Common myeloid progenitor, CD34-positive (primary cell): ENCODE measurements at regions of chr17 and their contacts with region 1.

Region 1: GRCh38 chr17:78360371-78361224 is 721 bp upstream of the SOCS3 start:
- DNase-seq: peak; percentile 78 to 88 (median 86)
- H3K4me3 ChIP-seq: peak overlapping the region; percentile 48 to 94 (median 77)
- H3K27ac ChIP-seq: peak overlapping the region in 1 of 2 experiments; percentile 61
- H3K4me1 ChIP-seq: peaks cover 0 to 64% (median 60%) of the 10 kb centered on the region in 4 experiments
- H3K27me3 ChIP-seq: no peaks in the 10 kb centered on the region

Region 2: GRCh38 chr17:78258323-78259191 is 102.0 kb before region 1 on chr17:
- CTCF ChIA-PET with region 1: no interaction called
- POLR2A ChIA-PET with region 1: interaction called, 12 read pairs
- DNase-seq: peak; percentile 82 to 96 (median 93)
- H3K4me3 ChIP-seq: peak overlapping the region in 5 of 7 experiments; percentile 4 to 56 (median 53)
- H3K27ac ChIP-seq: peak overlapping the region; percentile 66 to 91
- H3K4me1 ChIP-seq: peaks cover 19 to 91% (median 90%) of the 10 kb centered on the region in 4 experiments
- H3K27me3 ChIP-seq: no peaks in the 10 kb centered on the region

Region 3: DNA sequence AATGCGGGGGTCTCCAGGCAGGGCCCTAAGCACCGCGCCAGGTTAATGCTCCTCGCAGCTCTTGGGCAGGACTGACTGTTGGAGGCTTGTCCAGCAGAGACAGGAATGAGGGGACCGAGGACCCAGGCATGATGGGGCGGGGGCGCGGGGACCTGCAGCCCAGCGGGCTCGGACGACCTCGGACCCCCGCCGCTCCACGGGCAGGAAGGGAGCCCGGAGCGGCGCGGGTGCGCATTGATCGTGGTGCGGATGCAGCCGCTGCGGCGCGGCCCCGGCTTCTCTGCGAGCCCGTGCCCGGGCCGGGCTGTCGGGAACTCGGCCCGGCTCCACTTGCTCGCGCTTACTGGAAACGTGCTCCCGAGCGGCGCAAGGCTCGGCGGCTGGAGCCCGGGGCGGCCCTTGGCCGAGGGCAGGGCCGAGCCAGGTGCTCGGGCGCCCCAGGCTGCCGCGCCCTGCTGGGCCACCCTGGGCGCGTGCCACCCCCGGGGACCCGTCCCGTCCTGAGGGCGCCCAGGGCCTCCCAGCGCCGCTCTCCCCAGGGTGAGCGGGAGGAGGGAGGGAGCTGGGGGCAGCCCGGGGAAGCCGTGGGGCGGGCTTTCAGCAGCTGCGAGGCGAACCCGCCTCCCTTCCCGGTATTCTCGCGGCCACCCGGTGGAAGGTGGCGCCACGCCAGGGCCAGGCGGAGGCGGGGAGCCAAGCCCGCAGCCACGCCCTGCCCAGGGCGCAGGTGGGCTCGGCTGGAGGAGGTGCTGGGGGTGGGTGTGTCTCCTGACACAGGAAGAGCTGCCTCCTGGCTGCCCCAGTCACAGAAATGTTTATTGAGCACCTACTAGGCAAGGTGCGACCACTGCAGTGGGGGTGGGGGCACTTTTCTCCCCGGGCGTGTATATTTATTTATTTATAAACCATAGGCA is 46.6 kb before region 1 on chr17:
- CTCF ChIA-PET with region 1: interaction called, 10 read pairs
- POLR2A ChIA-PET with region 1: interaction called, 6 read pairs
- DNase-seq: peak; percentile 74 to 87 (median 86)
- H3K4me3 ChIP-seq: peak overlapping the region; percentile 19 to 73 (median 57)
- H3K27ac ChIP-seq: no peak overlapping the region
- H3K4me1 ChIP-seq: peaks cover 0 to 67% (median 52%) of the 10 kb centered on the region in 4 experiments
- H3K27me3 ChIP-seq: no peaks in the 10 kb centered on the region

Region 4: GRCh38 chr17:78343187-78343542 is 17.4 kb before region 1 on chr17:
- CTCF ChIA-PET with region 1: interaction called, 5 read pairs
- POLR2A ChIA-PET with region 1: interaction called, 14 read pairs
- DNase-seq: peak in 1 of 3 donors; percentile 72
- H3K4me3 ChIP-seq: peak overlapping the region in 3 of 7 experiments; percentile 19 to 64 (median 55)
- H3K27ac ChIP-seq: peak overlapping the region in 1 of 2 experiments; percentile 54
- H3K4me1 ChIP-seq: peaks cover 2 to 45% (median 29%) of the 10 kb centered on the region in 4 experiments
- H3K27me3 ChIP-seq: peaks cover 0 to 6% (median 0%) of the 10 kb centered on the region in 5 experiments

Region 5: GRCh38 chr17:78421484-78422266 is 61.1 kb after region 1 on chr17:
- CTCF ChIA-PET with region 1: interaction called, 104 read pairs
- POLR2A ChIA-PET with region 1: interaction called, 3 read pairs
- DNase-seq: peak; percentile 76 to 82 (median 77)
- H3K4me3 ChIP-seq: no peak overlapping the region
- H3K27ac ChIP-seq: no peak overlapping the region
- H3K4me1 ChIP-seq: peaks cover 4 to 15% (median 13%) of the 10 kb centered on the region in 4 experiments
- H3K27me3 ChIP-seq: no peaks in the 10 kb centered on the region